CD4-positive, alpha-beta T cell (primary cell): ENCODE measurements at regions of chr16 and their contacts with region 1.

Region 1: GRCh38 chr16:2486645-2487516 is 12.0 kb downstream of the TBC1D24 start:
- DNase-seq: peak; percentile 67 to 93 (median 79)
- ATAC-seq: peak; percentile 99
- H3K4me3 ChIP-seq: no peak overlapping the region
- H3K4me3 Mint-ChIP-seq: peak overlapping the region; percentile 13
- H3K27ac ChIP-seq: no peak overlapping the region
- H3K27ac Mint-ChIP-seq: peak overlapping the region; percentile 61
- H3K4me1 ChIP-seq: peaks cover 17% of the 10 kb centered on the region
- H3K4me1 Mint-ChIP-seq: peaks cover 12% of the 10 kb centered on the region
- H3K27me3 ChIP-seq: no peaks in the 10 kb centered on the region
- H3K27me3 Mint-ChIP-seq: no peaks in the 10 kb centered on the region
- CTCF ChIP-seq: peak; percentile 65

Region 2: GRCh38 chr16:2023098-2023925 is 463.6 kb before region 1 on chr16:
- CTCF ChIA-PET with region 1: no interaction called
- POLR2A ChIA-PET with region 1: no interaction called
- intact Hi-C with region 1: loop called in 1 of 2 experiments (anchors 5 kb)
- DNase-seq: peak; percentile 87 to 99 (median 96)
- ATAC-seq: peak; percentile 92
- H3K4me3 ChIP-seq: peak overlapping the region; percentile 31
- H3K4me3 Mint-ChIP-seq: peak overlapping the region; percentile 72
- H3K27ac ChIP-seq: peak overlapping the region in 1 of 2 donors; percentile 43
- H3K27ac Mint-ChIP-seq: peak overlapping the region; percentile 66
- H3K4me1 ChIP-seq: peaks cover 50% of the 10 kb centered on the region
- H3K4me1 Mint-ChIP-seq: peaks cover 19% of the 10 kb centered on the region
- H3K27me3 ChIP-seq: peaks cover 25 to 33% of the 10 kb centered on the region in 2 experiments
- H3K27me3 Mint-ChIP-seq: peaks cover 29% of the 10 kb centered on the region
- CTCF ChIP-seq: peak; percentile 90

Region 3: DNA sequence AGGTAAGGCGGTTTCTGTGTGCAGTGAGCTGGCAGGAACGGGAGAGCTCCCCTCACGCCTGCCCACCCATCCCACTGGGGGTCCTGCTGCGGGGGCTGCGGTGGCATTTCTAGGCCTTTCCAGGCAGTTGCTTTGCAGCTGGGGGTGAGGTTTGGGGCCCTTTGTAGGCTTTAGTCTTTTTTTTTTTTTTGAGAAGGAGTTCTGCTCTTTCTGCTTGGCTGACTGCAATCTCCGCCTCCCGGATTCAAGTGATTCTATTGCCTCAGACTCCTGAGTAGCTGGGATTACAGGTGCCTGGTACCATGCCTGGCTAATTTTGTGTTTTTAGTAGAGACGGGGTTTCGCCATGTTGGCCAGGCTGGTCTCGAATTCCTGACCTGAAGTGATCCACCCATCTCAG is 428.0 kb before region 1 on chr16:
- CTCF ChIA-PET with region 1: no interaction called
- POLR2A ChIA-PET with region 1: no interaction called
- intact Hi-C with region 1: no loop called
- DNase-seq: no peak
- ATAC-seq: no peak
- H3K4me3 ChIP-seq: no peak overlapping the region
- H3K4me3 Mint-ChIP-seq: no peak overlapping the region
- H3K27ac ChIP-seq: no peak overlapping the region
- H3K27ac Mint-ChIP-seq: no peak overlapping the region
- H3K4me1 ChIP-seq: no peaks in the 10 kb centered on the region
- H3K4me1 Mint-ChIP-seq: no peaks in the 10 kb centered on the region
- H3K27me3 ChIP-seq: no peaks in the 10 kb centered on the region
- H3K27me3 Mint-ChIP-seq: no peaks in the 10 kb centered on the region
- CTCF ChIP-seq: no peak

Region 4: GRCh38 chr16:2586241-2586640 is 99.4 kb after region 1 on chr16:
- CTCF ChIA-PET with region 1: no interaction called
- POLR2A ChIA-PET with region 1: no interaction called
- intact Hi-C with region 1: no loop called
- DNase-seq: peak in 1 of 14 experiments; percentile 20
- ATAC-seq: peak; percentile 37
- H3K4me3 ChIP-seq: no peak overlapping the region
- H3K4me3 Mint-ChIP-seq: no peak overlapping the region
- H3K27ac ChIP-seq: no peak overlapping the region
- H3K27ac Mint-ChIP-seq: no peak overlapping the region
- H3K4me1 ChIP-seq: no peaks in the 10 kb centered on the region
- H3K4me1 Mint-ChIP-seq: no peaks in the 10 kb centered on the region
- H3K27me3 ChIP-seq: no peaks in the 10 kb centered on the region
- H3K27me3 Mint-ChIP-seq: no peaks in the 10 kb centered on the region
- CTCF ChIP-seq: no peak